Psoas muscle (tissue), 8 donors: ENCODE measurements at regions of chr10 and their contacts with region 1.

Region 1: DNA sequence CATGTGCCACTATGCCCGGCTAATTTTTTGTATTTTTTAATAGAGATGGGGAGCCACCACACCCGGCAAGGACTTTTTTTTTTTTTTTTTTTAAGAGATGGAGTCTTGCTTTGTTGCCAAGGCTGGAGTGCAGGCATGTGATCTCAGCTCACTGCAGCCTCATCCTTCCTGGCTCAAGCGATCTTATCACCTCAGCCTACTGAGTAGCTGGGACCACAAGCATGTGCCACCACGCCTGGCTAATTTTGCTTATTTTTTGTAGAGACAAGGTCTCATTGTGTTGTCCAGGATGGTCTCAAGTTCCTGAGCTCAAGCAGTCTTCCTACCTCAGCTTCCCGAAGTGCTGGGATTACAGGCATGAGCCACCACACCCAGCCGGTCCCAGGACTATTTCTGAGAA is 9.3 kb upstream of the MCU start:
- DNase-seq: no peak
- ATAC-seq: no peak
- H3K4me3 ChIP-seq: no peak overlapping the region
- H3K27ac ChIP-seq: peak overlapping the region; percentile 67
- H3K4me1 ChIP-seq: peaks cover 32% of the 10 kb centered on the region
- H3K27me3 ChIP-seq: no peaks in the 10 kb centered on the region
- CTCF ChIP-seq: no peak

Region 2: GRCh38 chr10:72642318-72642717 is 40.3 kb before region 1 on chr10:
- intact Hi-C with region 1: loop called in 1 of 2 experiments (anchors 5 kb)
- DNase-seq: no peak
- ATAC-seq: no peak
- H3K4me3 ChIP-seq: no peak overlapping the region
- H3K27ac ChIP-seq: no peak overlapping the region
- H3K4me1 ChIP-seq: peaks cover 16% of the 10 kb centered on the region
- H3K27me3 ChIP-seq: no peaks in the 10 kb centered on the region
- CTCF ChIP-seq: no peak

Region 3: GRCh38 chr10:72653383-72654096 is 29.1 kb before region 1 on chr10:
- intact Hi-C with region 1: loop called in 1 of 2 experiments (anchors 1 kb)
- DNase-seq: no peak
- ATAC-seq: peak; percentile 83 to 94 (median 91)
- H3K4me3 ChIP-seq: no peak overlapping the region
- H3K27ac ChIP-seq: peak overlapping the region; percentile 81
- H3K4me1 ChIP-seq: no peaks in the 10 kb centered on the region
- H3K27me3 ChIP-seq: no peaks in the 10 kb centered on the region
- CTCF ChIP-seq: no peak

Region 4: GRCh38 chr10:72834183-72834825 is 151.7 kb after region 1 on chr10:
- intact Hi-C with region 1: no loop called
- DNase-seq: no peak
- ATAC-seq: peak; percentile 37 to 86 (median 75)
- H3K4me3 ChIP-seq: no peak overlapping the region
- H3K27ac ChIP-seq: no peak overlapping the region
- H3K4me1 ChIP-seq: peaks cover 27% of the 10 kb centered on the region
- H3K27me3 ChIP-seq: no peaks in the 10 kb centered on the region
- CTCF ChIP-seq: peak; percentile 63

Region 5: DNA sequence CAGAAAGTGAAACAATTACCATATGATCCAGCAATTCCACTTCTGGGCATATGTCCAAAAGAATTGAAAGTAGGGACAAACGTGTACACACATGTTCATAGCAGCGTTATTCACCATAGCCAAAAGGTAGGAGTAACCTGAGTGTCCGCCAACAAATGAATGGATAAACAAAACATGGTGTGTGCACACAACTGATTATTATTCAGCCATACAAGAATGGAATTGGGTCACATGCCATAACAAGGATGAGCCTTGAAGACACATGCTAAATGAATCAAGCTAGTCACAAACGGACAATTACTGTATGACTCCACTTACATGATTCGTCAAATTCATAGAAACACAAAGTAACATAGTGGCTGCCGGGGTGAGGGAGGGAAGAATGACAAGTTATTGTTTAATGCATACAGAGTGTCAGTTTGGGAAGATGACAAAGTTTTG is 206.8 kb after region 1 on chr10:
- intact Hi-C with region 1: no loop called
- DNase-seq: no peak
- ATAC-seq: peak; percentile 25 to 45 (median 38)
- H3K4me3 ChIP-seq: no peak overlapping the region
- H3K27ac ChIP-seq: no peak overlapping the region
- H3K4me1 ChIP-seq: no peaks in the 10 kb centered on the region
- H3K27me3 ChIP-seq: no peaks in the 10 kb centered on the region
- CTCF ChIP-seq: no peak